Activated CD4-positive, alpha-beta T cell treated with anti-CD3 and anti-CD28 coated beads for 36 hours (primary cell): ENCODE measurements at regions of chr13 and their contacts with region 1.

Region 1: GRCh38 chr13:73303851-73304250 is 245.0 kb downstream of the KLF5 start:
- DNase-seq: peak; percentile 61
- ATAC-seq: peak; percentile 97
- H3K4me3 Mint-ChIP-seq: no peak overlapping the region
- H3K27ac Mint-ChIP-seq: no peak overlapping the region
- H3K4me1 Mint-ChIP-seq: peaks cover 11% of the 10 kb centered on the region
- H3K27me3 Mint-ChIP-seq: peaks cover 2% of the 10 kb centered on the region

Region 2: GRCh38 chr13:73421310-73421912 is 117.6 kb after region 1 on chr13:
- CTCF ChIA-PET with region 1: no interaction called
- POLR2A ChIA-PET with region 1: no interaction called
- intact Hi-C with region 1: loop called in 1 of 2 experiments (anchors 1 kb)
- DNase-seq: peak; percentile 52
- ATAC-seq: peak; percentile 94
- H3K4me3 Mint-ChIP-seq: no peak overlapping the region
- H3K27ac Mint-ChIP-seq: no peak overlapping the region
- H3K4me1 Mint-ChIP-seq: peaks cover 5% of the 10 kb centered on the region
- H3K27me3 Mint-ChIP-seq: no peaks in the 10 kb centered on the region